Naive thymus-derived CD4-positive, alpha-beta T cell (primary cell): ENCODE measurements at regions of chr17 and their contacts with region 1.

Region 1: GRCh38 chr17:32253117-32253611 is 12.5 kb upstream of the RHBDL3 start:
- DNase-seq: peak in 7 of 9 donors; percentile 18 to 75 (median 40)
- ATAC-seq: peak; percentile 98
- H3K4me3 ChIP-seq: no peak overlapping the region
- H3K4me3 Mint-ChIP-seq: no peak overlapping the region
- H3K27ac ChIP-seq: no peak overlapping the region
- H3K27ac Mint-ChIP-seq: no peak overlapping the region
- H3K4me1 ChIP-seq: no peaks in the 10 kb centered on the region
- H3K4me1 Mint-ChIP-seq: peaks cover 0 to 4% (median 0%) of the 10 kb centered on the region in 7 donors
- H3K27me3 ChIP-seq: no peaks in the 10 kb centered on the region
- H3K27me3 Mint-ChIP-seq: peaks cover 0 to 37% (median 0%) of the 10 kb centered on the region in 5 donors

Region 2: DNA sequence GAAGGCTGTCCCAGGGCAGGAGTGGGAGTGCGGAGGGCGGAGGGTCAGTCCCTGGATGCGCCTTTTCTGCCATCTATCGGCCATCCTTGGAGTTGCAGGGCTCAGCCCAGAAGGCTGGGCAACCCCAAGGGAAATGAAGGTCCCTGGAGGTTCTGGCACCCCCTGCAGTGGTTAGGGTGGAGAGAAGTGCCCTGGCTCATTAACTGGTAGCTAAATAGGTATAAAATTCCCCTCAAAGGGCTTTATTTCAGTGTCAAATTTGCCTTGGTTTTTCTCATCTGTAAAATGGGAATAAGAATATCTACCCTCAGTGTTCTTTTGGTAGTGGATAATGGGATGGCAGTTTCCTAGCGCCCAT is 66.4 kb after region 1 on chr17:
- CTCF ChIA-PET with region 1: interaction called, 7 read pairs
- POLR2A ChIA-PET with region 1: interaction called, 3 read pairs
- intact Hi-C with region 1: loop called (anchors 1 kb)
- DNase-seq: peak; percentile 47 to 85 (median 60)
- ATAC-seq: peak; percentile 89
- H3K4me3 ChIP-seq: no peak overlapping the region
- H3K4me3 Mint-ChIP-seq: peak overlapping the region; percentile 67 to 87 (median 74)
- H3K27ac ChIP-seq: no peak overlapping the region
- H3K27ac Mint-ChIP-seq: peak overlapping the region in 1 of 9 donors; percentile 66
- H3K4me1 ChIP-seq: peaks cover 0 to 13% of the 10 kb centered on the region in 2 donors
- H3K4me1 Mint-ChIP-seq: peaks cover 8 to 37% (median 11%) of the 10 kb centered on the region in 7 donors
- H3K27me3 ChIP-seq: no peaks in the 10 kb centered on the region
- H3K27me3 Mint-ChIP-seq: peaks cover 3 to 26% (median 5%) of the 10 kb centered on the region in 5 donors

Region 3: GRCh38 chr17:32341857-32342602 is 88.9 kb after region 1 on chr17 and contains the start of gene C17orf75:
- CTCF ChIA-PET with region 1: no interaction called
- POLR2A ChIA-PET with region 1: no interaction called
- intact Hi-C with region 1: loop called in 1 of 2 experiments (anchors 1 kb)
- DNase-seq: peak; percentile 63 to 81 (median 76)
- ATAC-seq: peak; percentile 92
- H3K4me3 ChIP-seq: peak within 1 kb of the TSS; percentile 64
- H3K4me3 Mint-ChIP-seq: peak within 1 kb of the TSS; percentile 83 to 94 (median 92)
- H3K27ac ChIP-seq: peak within 1 kb of the TSS; percentile 80
- H3K27ac Mint-ChIP-seq: peak within 1 kb of the TSS; percentile 83 to 96 (median 93)
- H3K4me1 ChIP-seq: peaks cover 5 to 9% of the 10 kb centered on the region in 2 donors
- H3K4me1 Mint-ChIP-seq: peaks cover 19 to 33% (median 25%) of the 10 kb centered on the region in 7 donors
- H3K27me3 ChIP-seq: no peaks in the 10 kb centered on the region
- H3K27me3 Mint-ChIP-seq: no peaks in the 10 kb centered on the region
- total RNA-seq, gene C17orf75: 14.2 to 22.0 (median 17.9) TPM

Region 4: GRCh38 chr17:32444308-32445073 is 191.3 kb after region 1 on chr17 and contains the start of gene PSMD11:
- CTCF ChIA-PET with region 1: no interaction called
- POLR2A ChIA-PET with region 1: no interaction called
- intact Hi-C with region 1: loop called (anchors 1 kb)
- DNase-seq: peak; percentile 98 to 100 (median 99)
- ATAC-seq: peak; percentile 99
- H3K4me3 ChIP-seq: peak within 1 kb of the TSS; percentile 80
- H3K4me3 Mint-ChIP-seq: peak within 1 kb of the TSS; percentile 78 to 93 (median 86)
- H3K27ac ChIP-seq: peak within 1 kb of the TSS; percentile 94
- H3K27ac Mint-ChIP-seq: peak within 1 kb of the TSS; percentile 52 to 83 (median 78)
- H3K4me1 ChIP-seq: peaks cover 13 to 14% of the 10 kb centered on the region in 2 donors
- H3K4me1 Mint-ChIP-seq: peaks cover 25 to 46% (median 36%) of the 10 kb centered on the region in 7 donors
- H3K27me3 ChIP-seq: no peaks in the 10 kb centered on the region
- H3K27me3 Mint-ChIP-seq: peaks cover 0 to 23% (median 0%) of the 10 kb centered on the region in 5 donors
- total RNA-seq, gene PSMD11: 60.1 to 112 (median 67.5) TPM

Region 5: GRCh38 chr17:32461853-32462617 is 208.9 kb after region 1 on chr17:
- CTCF ChIA-PET with region 1: no interaction called
- POLR2A ChIA-PET with region 1: no interaction called
- intact Hi-C with region 1: loop called in 1 of 2 experiments (anchors 1 kb)
- DNase-seq: peak; percentile 27 to 71 (median 63)
- ATAC-seq: peak; percentile 91
- H3K4me3 ChIP-seq: no peak overlapping the region
- H3K4me3 Mint-ChIP-seq: peak overlapping the region in 1 of 10 donors; percentile 15
- H3K27ac ChIP-seq: no peak overlapping the region
- H3K27ac Mint-ChIP-seq: peak overlapping the region in 7 of 9 donors; percentile 0 to 87 (median 19)
- H3K4me1 ChIP-seq: peaks cover 8 to 9% of the 10 kb centered on the region in 2 donors
- H3K4me1 Mint-ChIP-seq: peaks cover 25 to 43% (median 31%) of the 10 kb centered on the region in 7 donors
- H3K27me3 ChIP-seq: no peaks in the 10 kb centered on the region
- H3K27me3 Mint-ChIP-seq: no peaks in the 10 kb centered on the region

Region 6: GRCh38 chr17:32755045-32755805 is 502.1 kb after region 1 on chr17:
- CTCF ChIA-PET with region 1: no interaction called
- POLR2A ChIA-PET with region 1: no interaction called
- intact Hi-C with region 1: loop called in 1 of 2 experiments (anchors 10 kb)
- DNase-seq: peak in 7 of 9 donors; percentile 33 to 64 (median 57)
- ATAC-seq: peak; percentile 94
- H3K4me3 ChIP-seq: no peak overlapping the region
- H3K4me3 Mint-ChIP-seq: no peak overlapping the region
- H3K27ac ChIP-seq: no peak overlapping the region
- H3K27ac Mint-ChIP-seq: no peak overlapping the region
- H3K4me1 ChIP-seq: peaks cover 7% of the 10 kb centered on the region in 2 donors
- H3K4me1 Mint-ChIP-seq: peaks cover 5 to 13% (median 12%) of the 10 kb centered on the region in 7 donors
- H3K27me3 ChIP-seq: no peaks in the 10 kb centered on the region
- H3K27me3 Mint-ChIP-seq: no peaks in the 10 kb centered on the region